Right cardiac atrium (tissue), 5 donors: ENCODE measurements at regions of chr2 and their contacts with region 1.

Region 1: DNA sequence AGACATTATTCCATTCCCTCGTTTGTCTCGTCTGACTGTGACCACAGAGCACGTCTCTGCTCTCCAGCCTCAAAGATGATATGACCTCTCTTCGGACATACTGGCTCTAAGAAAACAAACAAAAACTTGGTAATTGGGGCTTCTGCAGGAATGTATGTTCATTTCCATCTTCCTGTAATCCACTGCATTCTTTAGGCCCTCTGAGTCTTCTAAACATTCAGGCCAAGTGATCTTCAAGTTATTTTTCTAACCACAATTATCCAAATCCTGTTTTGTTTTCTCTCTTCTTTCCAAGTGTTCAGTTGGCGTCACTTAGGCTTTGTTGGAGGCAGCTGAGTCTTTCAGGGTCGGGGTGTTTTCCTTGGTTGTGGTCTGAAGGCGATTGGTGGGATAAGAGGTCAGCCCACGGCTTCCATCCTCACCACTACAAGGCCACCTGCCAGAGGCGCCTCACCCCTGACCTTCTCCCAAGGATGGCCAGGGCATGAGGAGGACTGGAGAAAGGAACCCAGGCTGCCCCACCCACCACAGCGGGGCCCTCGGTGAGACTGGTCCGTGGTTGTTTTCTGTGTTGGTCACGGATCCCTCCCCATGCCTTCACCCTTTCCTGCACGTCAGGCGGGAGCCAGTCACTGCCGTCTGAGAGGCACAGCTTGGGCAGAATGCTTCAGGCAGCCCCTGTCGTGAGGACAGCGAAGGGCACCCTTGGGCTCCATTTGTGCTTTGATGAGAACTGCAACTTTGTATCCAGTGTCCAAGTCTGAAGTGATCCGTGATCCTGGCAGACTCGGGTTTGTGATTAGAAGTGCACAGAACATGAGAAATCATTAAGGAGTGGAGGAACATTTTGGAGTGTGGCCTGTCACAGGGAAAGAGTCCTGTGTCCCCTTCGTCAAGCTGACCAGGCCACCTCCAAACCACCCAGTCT is 88.6 kb upstream of the FHL2 start:
- DNase-seq: peak; percentile 35 to 77 (median 76)
- ATAC-seq: peak; percentile 69 to 77
- H3K4me3 ChIP-seq: no peak overlapping the region
- H3K27ac ChIP-seq: peak overlapping the region; percentile 93
- H3K4me1 ChIP-seq: peaks cover 3% of the 10 kb centered on the region
- H3K27me3 ChIP-seq: no peaks in the 10 kb centered on the region

Region 2: GRCh38 chr2:105444219-105444598 is 43.2 kb before region 1 on chr2:
- intact Hi-C with region 1: loop called in 2 of 4 experiments (anchors 5 kb)
- DNase-seq: no peak
- ATAC-seq: no peak
- H3K4me3 ChIP-seq: no peak overlapping the region
- H3K27ac ChIP-seq: no peak overlapping the region
- H3K4me1 ChIP-seq: no peaks in the 10 kb centered on the region
- H3K27me3 ChIP-seq: no peaks in the 10 kb centered on the region